ENCODE measurements at regions of chr6 and their contacts with region 1.

Region 1: DNA sequence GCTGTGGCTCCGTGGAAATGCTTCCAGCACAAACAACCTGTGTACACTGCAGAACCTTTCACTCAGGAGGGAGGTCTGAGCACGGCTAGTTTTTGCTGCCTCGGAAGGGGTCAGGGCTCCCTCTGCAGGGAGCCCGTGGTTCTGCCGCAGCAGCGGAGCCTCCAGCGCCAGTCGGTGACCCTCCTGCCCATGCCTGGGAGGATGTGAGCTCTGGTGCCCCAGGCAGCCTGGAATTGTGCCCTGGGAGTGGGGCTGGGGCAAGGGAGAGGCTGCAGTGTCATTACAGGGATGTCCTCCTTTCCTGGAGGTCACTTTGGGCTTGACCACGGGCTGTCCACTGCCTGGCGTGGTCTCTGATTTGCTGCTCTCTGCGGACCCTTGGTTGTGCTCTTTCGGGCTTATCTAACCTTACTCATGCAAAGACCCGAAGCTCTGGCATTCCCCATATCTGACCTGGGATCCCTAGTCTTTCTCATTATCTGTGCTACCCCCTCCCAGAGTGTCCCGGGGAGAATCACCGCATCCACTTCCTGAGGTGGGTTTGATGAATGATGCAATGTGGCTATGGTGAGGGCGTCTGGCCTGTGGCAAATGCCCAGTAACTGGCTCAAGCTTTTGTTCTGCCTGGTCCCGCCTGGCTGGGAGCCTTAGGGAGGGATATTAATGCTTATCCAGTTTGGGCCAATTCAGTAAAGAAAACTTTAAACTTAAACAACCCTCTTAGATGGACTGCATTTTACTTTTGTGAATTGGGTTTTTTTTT is 59.6 kb upstream of the TAGAP start:
- DNase-seq: peak; percentile 43 to 79 (median 47)
- H3K4me3 ChIP-seq: no peak overlapping the region
- H3K27ac ChIP-seq: no peak overlapping the region
- H3K4me1 ChIP-seq: no peaks in the 10 kb centered on the region
- H3K27me3 ChIP-seq: no peaks in the 10 kb centered on the region
- CTCF ChIP-seq: peak; percentile 29 to 60 (median 46)
- EP300 ChIP-seq: no peak
- POLR2A ChIP-seq: no peak

Region 2: DNA sequence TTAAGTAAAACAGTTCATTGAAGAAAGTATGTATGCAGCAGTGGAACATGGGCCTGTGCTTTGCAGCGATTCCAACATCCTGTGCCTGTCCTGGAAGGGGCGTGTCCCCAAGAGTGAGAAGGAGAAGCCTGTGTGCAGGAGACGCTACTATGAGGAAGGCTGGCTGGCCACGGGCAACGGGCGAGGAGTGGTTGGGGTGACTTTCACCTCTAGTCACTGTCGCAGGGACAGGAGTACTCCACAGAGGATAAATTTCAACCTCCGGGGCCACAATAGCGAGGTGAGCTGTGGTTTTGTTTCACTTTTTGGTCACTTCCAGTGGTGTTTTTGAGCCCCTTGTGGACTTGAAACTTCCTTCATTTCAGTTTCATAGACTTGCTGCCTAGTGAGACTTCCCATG is 790.4 kb before region 1 on chr6:
- intact Hi-C with region 1: no loop called
- DNase-seq: no peak
- H3K4me3 ChIP-seq: no peak overlapping the region
- H3K27ac ChIP-seq: no peak overlapping the region
- H3K4me1 ChIP-seq: no peaks in the 10 kb centered on the region
- H3K27me3 ChIP-seq: no peaks in the 10 kb centered on the region
- CTCF ChIP-seq: no peak
- EP300 ChIP-seq: no peak
- POLR2A ChIP-seq: no peak

Region 3: GRCh38 chr6:158999666-159000403 is 104.5 kb before region 1 on chr6 and contains the start of gene RSPH3:
- intact Hi-C with region 1: loop called in 1 of 4 experiments (anchors 10 kb)
- DNase-seq: peak; percentile 94 to 97 (median 95)
- H3K4me3 ChIP-seq: peak within 1 kb of the TSS; percentile 72
- H3K27ac ChIP-seq: peak within 1 kb of the TSS; percentile 43 to 78
- H3K4me1 ChIP-seq: no peaks in the 10 kb centered on the region
- H3K27me3 ChIP-seq: no peaks in the 10 kb centered on the region
- CTCF ChIP-seq: peak in 2 of 3 donors; percentile 11 to 25
- EP300 ChIP-seq: no peak
- POLR2A ChIP-seq: peak; percentile 38
- total RNA-seq, gene RSPH3: 4.5 to 9.3 (median 7.6) TPM

Region 4: GRCh38 chr6:159042003-159042825 is 62.1 kb before region 1 on chr6:
- intact Hi-C with region 1: loop called in 2 of 4 experiments (anchors 5 kb)
- DNase-seq: peak; percentile 47 to 66 (median 51)
- H3K4me3 ChIP-seq: no peak overlapping the region
- H3K27ac ChIP-seq: no peak overlapping the region
- H3K4me1 ChIP-seq: peaks cover 3% of the 10 kb centered on the region
- H3K27me3 ChIP-seq: no peaks in the 10 kb centered on the region
- CTCF ChIP-seq: peak; percentile 52 to 73 (median 57)
- EP300 ChIP-seq: no peak
- POLR2A ChIP-seq: no peak

Region 5: DNA sequence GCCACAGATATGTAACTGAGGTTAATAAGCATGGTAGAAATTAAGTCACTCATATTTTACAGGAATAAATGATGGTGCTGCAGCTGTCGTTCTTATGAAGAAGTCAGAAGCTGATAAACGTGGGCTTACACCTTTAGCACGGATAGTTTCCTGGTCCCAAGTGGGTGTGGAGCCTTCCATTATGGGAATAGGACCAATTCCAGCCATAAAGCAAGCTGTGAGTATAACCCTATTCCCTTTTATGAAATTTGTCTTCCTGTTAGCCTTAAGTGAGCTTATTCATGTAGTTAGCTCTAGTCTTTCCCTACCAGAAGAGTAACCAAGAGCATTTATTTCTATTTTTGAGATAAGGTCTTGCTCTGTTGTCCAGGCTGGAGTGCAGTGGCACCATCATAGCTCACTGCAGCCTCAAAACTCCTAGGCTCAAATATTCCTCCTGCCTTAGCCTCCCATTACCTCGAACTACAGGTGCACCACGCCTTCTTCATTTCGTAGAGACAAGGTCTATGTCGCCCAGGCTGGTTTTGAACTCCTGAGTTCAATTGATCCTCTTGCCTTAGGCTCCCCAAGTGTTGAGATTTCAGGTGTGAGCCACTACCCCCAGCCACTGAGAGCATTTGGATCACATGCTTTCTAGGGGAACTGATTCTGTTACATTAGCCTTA is 673.0 kb after region 1 on chr6:
- intact Hi-C with region 1: no loop called
- DNase-seq: no peak
- H3K4me3 ChIP-seq: no peak overlapping the region
- H3K27ac ChIP-seq: no peak overlapping the region
- H3K4me1 ChIP-seq: no peaks in the 10 kb centered on the region
- H3K27me3 ChIP-seq: no peaks in the 10 kb centered on the region
- CTCF ChIP-seq: no peak
- EP300 ChIP-seq: no peak
- POLR2A ChIP-seq: no peak